T-cell (primary cell): ENCODE measurements at regions of chr7 and their contacts with region 1.

Region 1: DNA sequence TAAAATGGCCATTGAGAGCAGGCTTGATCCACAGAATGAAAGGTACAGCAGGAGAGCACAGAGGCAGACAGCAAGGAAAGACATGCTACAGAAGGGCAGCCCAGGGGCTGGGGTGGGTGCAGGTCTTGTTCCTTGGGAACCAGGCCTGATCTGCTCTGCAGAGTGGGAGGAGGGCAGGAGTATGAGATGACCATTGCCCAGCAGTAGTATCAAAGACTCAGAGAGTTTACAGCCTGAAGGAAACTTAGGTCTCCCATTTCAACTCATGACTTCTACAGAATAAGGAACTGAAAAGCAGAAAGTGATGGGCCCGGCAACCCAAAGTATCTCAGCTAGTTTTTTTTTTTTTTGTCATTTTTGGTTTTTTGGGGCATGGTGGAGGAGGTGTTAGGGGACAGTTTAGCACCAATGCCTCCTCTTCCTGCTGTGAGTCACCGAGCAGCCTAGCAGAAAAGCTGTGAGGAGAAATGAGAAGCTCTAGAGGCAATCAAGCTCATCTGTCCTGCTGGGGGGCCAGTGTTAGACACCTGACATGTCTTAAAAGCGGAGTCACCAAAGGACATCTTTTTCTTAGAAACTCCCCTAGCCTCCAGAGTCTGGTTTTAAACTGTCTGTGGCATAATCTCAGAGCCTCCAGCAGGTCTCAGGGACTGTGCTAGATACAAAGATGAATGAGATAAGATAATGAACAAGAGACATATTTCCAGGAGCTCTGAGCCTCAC is 34.3 kb upstream of the HERPUD2 start:
- DNase-seq: peak in 31 of 35 experiments; percentile 19 to 75 (median 43)
- ATAC-seq: peak; percentile 34 to 66 (median 42)
- H3K4me3 ChIP-seq: no peak overlapping the region
- H3K4me3 Mint-ChIP-seq: peak overlapping the region in 1 of 3 donors; percentile 17
- H3K27ac ChIP-seq: peak overlapping the region; percentile 81
- H3K27ac Mint-ChIP-seq: peak overlapping the region; percentile 35 to 65
- H3K4me1 ChIP-seq: peaks cover 18 to 66% of the 10 kb centered on the region in 2 experiments
- H3K4me1 Mint-ChIP-seq: peaks cover 48 to 63% (median 59%) of the 10 kb centered on the region in 3 donors
- H3K27me3 ChIP-seq: no peaks in the 10 kb centered on the region
- H3K27me3 Mint-ChIP-seq: peaks cover 0 to 2% of the 10 kb centered on the region in 2 donors

Region 2: DNA sequence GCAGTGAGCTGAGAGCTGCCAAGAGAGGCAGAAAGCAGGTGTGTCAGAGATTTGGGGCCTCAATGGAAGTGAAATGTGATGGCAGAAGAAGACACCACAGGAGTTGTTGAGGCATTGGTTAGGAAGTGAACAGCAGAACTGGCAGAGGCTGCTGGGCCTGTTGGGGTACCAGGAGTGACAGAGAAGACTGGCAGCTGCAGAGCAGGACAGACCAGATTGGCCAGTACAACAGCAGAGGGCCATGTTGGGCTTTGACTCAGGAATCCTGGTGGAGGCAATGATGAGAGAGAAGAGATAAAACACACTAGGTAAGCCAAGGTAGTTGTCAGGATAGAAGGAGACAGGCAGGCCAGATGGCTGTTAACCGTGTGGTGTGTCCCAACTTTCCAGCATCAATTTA is 14.4 kb before region 1 on chr7:
- CTCF ChIA-PET with region 1: interaction called, 5 to 26 read pairs
- POLR2A ChIA-PET with region 1: interaction called in 1 of 2 experiments, 3 read pairs
- DNase-seq: no peak
- ATAC-seq: no peak
- H3K4me3 ChIP-seq: no peak overlapping the region
- H3K4me3 Mint-ChIP-seq: no peak overlapping the region
- H3K27ac ChIP-seq: no peak overlapping the region
- H3K27ac Mint-ChIP-seq: no peak overlapping the region
- H3K4me1 ChIP-seq: peaks cover 4 to 8% of the 10 kb centered on the region in 2 experiments
- H3K4me1 Mint-ChIP-seq: peaks cover 5 to 15% (median 6%) of the 10 kb centered on the region in 3 donors
- H3K27me3 ChIP-seq: no peaks in the 10 kb centered on the region
- H3K27me3 Mint-ChIP-seq: no peaks in the 10 kb centered on the region